Left lung (tissue), 14 donors: ENCODE measurements at regions of chr17 and their contacts with region 1.

Region 1: DNA sequence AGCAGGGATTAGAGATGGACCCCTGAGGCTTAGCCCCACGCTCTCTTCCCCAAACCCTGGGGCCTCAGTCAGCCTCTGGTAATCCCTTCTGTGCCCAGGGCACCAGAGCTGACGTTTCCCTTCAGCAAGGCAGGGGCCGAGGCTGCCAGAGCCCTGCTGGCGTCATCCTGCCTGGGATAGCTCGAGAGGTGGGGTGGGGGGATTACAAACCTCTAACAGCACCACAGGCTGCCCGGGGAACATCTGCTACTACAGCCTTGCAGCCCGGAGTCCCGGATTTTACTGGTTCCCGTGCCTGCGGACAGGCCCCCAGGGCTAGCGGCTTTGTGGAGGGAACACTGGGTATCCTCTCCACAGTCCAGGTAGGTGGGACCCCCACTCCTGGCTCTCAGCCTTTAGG is at the start of gene AANAT:
- DNase-seq: peak in 1 of 4 donors; percentile 68
- ATAC-seq: no peak
- H3K4me3 ChIP-seq: no peak within 1 kb of the TSS
- H3K27ac ChIP-seq: no peak within 1 kb of the TSS
- H3K4me1 ChIP-seq: peaks cover 0 to 9% of the 10 kb centered on the region in 2 donors
- H3K27me3 ChIP-seq: no peaks in the 10 kb centered on the region
- CTCF ChIP-seq: no peak
- polyA plus RNA-seq, gene AANAT: 0.10 to 0.23 (median 0.18) TPM in 5 of 6 donors, not detected in the other

Region 2: DNA sequence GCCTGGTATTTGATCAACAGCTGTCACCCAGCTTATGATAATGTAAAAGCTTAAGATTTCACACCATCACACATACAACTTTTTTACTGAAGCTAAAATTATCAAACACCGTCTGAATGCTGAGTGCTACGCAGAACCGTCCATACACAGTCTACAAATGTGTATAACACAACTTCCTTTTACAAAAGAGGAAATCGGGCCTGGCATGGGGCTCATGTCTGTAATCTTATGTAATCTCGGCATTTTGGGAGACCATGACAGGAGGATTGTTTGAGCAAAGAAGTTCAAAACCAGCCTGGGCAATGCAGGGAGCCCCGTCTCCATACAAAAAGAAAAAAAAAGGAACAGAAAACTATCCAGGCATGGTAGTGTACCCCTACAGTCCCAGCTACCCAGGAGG is 139.7 kb before region 1 on chr17:
- intact Hi-C with region 1: no loop called
- DNase-seq: peak in 1 of 4 donors; percentile 38
- ATAC-seq: peak; percentile 68
- H3K4me3 ChIP-seq: peak overlapping the region in 1 of 2 donors; percentile 1
- H3K27ac ChIP-seq: peak overlapping the region; percentile 19 to 81
- H3K4me1 ChIP-seq: peaks cover 0 to 18% of the 10 kb centered on the region in 2 donors
- H3K27me3 ChIP-seq: no peaks in the 10 kb centered on the region
- CTCF ChIP-seq: no peak

Region 3: GRCh38 chr17:76506408-76507349 is 39.3 kb after region 1 on chr17:
- intact Hi-C with region 1: loop called in 1 of 2 experiments (anchors 5 kb)
- DNase-seq: peak in 3 of 4 donors; percentile 81 to 95 (median 82)
- ATAC-seq: peak; percentile 83
- H3K4me3 ChIP-seq: no peak overlapping the region
- H3K27ac ChIP-seq: no peak overlapping the region
- H3K4me1 ChIP-seq: peaks cover 8 to 39% of the 10 kb centered on the region in 2 donors
- H3K27me3 ChIP-seq: peaks cover 0 to 12% of the 10 kb centered on the region in 2 donors
- CTCF ChIP-seq: peak; percentile 96 to 99